ENCODE measurements at regions of chr7 and their contacts with region 1.

Region 1: DNA sequence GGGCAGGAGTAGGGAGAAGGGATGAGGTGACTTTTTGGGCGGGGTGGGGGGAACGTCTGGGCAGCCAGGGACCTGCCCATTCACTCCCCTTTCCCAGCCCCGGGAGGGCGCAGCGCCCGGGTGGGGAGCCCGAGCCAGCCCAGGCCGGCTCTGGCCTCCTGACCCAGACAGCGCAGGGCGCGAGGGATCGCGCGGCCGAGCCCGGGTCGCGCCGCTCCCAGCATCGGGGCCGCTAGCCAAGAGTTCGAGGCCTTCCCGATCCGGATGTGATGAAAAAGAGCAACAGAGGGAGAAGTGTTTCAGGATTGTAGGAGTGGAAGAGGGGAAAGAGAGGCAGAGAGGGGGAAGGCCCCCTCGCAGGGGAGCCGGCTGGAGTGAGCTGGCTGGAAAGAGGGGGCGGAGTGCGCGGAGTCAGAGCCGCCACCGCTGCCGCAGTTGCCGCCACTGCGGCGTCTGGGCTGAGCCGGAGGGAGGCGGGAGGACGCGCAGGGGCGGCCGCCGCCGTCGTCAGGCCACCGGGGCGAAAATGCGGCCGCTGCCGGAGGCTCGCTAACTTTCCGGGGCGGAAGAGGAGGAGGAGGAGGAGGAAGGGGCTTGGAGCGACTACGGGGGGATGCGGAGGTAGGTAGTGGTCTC is at the start of gene MDFIC:
- DNase-seq: peak; percentile 82 to 92 (median 91)
- ATAC-seq: peak; percentile 94 to 96
- H3K4me3 ChIP-seq: peak within 1 kb of the TSS; percentile 71
- H3K27ac ChIP-seq: peak within 1 kb of the TSS; percentile 74
- H3K4me1 ChIP-seq: no peaks in the 10 kb centered on the region
- H3K27me3 ChIP-seq: no peaks in the 10 kb centered on the region
- total RNA-seq, gene MDFIC: 18.6 to 23.8 (median 22.2) TPM

Region 2: GRCh38 chr7:114708646-114709045 is 213.5 kb before region 1 on chr7:
- intact Hi-C with region 1: no loop called
- DNase-seq: no peak
- ATAC-seq: no peak
- H3K4me3 ChIP-seq: no peak overlapping the region
- H3K27ac ChIP-seq: no peak overlapping the region
- H3K4me1 ChIP-seq: no peaks in the 10 kb centered on the region
- H3K27me3 ChIP-seq: no peaks in the 10 kb centered on the region

Region 3: DNA sequence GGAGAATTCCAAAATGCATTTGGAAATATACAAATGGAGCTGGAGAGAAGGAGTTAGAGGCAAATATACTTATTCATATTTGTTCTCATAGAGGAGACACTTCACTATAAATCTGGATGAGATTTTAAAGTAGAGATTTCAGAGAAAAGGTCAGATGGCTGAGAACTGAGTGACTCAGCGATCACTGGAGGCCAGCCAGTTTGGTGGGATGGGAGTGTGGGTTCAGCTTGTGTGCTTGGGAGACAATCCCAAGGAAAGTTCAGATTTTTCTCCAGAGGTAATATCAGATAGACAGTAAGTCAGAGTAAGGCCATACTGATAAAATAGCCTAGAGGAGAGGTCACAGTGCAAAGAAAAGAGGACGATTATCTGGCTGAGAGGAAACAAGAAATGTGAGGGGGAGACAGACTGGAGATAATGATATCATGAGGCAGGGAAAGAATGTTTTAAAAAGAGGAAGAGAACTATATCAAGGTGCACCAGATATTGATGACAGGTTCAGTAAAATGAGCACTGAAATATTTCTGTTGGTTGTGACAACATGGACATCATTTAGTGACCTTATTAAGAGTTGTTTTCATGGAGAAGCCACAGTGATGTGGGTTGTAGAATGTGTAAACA is 66.7 kb after region 1 on chr7:
- intact Hi-C with region 1: loop called in 1 of 4 experiments (anchors 10 kb)
- DNase-seq: peak; percentile 77 to 85 (median 85)
- ATAC-seq: peak; percentile 82 to 98
- H3K4me3 ChIP-seq: no peak overlapping the region
- H3K27ac ChIP-seq: peak overlapping the region; percentile 19
- H3K4me1 ChIP-seq: no peaks in the 10 kb centered on the region
- H3K27me3 ChIP-seq: no peaks in the 10 kb centered on the region

Region 4: DNA sequence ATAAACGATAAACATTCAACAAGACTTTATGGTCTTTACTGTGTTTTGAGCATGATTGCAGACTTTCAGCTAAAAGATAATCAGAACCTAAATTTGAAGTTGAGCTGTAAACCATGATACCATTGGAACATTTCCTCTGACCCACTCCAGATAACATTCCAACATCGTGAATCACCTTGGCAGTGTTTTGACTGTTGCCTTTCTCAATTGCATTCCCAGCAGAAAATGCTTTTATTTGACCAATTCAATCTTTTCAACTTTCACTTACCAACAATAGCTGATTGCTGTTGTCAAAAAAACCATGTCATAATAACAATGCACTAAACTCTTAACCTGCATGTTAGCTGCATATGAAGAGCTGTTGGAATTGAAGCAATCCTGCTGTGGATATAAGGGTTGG is 165.3 kb after region 1 on chr7:
- intact Hi-C with region 1: loop called in 1 of 4 experiments (anchors 10 kb)
- DNase-seq: no peak
- ATAC-seq: peak; percentile 90 to 95
- H3K4me3 ChIP-seq: no peak overlapping the region
- H3K27ac ChIP-seq: no peak overlapping the region
- H3K4me1 ChIP-seq: no peaks in the 10 kb centered on the region
- H3K27me3 ChIP-seq: no peaks in the 10 kb centered on the region

Measured in right cardiac atrium (tissue), 5 donors.